ENCODE measurements at regions of chr11 and their contacts with region 1.

Region 1: GRCh38 chr11:122754553-122755322 is 83.6 kb upstream of the CRTAM start:
- DNase-seq: peak in 3 of 5 donors; percentile 28 to 54 (median 46)
- H3K4me3 ChIP-seq: no peak overlapping the region
- H3K4me3 Mint-ChIP-seq: no peak overlapping the region
- H3K27ac ChIP-seq: no peak overlapping the region
- H3K27ac Mint-ChIP-seq: peak overlapping the region in 4 of 8 donors; percentile 19 to 66 (median 50)
- H3K4me1 ChIP-seq: peaks cover 38% of the 10 kb centered on the region
- H3K4me1 Mint-ChIP-seq: peaks cover 42 to 60% (median 45%) of the 10 kb centered on the region in 3 donors
- H3K27me3 ChIP-seq: no peaks in the 10 kb centered on the region
- H3K27me3 Mint-ChIP-seq: no peaks in the 10 kb centered on the region

Region 2: GRCh38 chr11:122628810-122629555 is 125.8 kb before region 1 on chr11:
- CTCF ChIA-PET with region 1: interaction called, 199 read pairs
- POLR2A ChIA-PET with region 1: no interaction called
- DNase-seq: peak; percentile 39 to 76 (median 42)
- H3K4me3 ChIP-seq: no peak overlapping the region
- H3K4me3 Mint-ChIP-seq: peak overlapping the region in 1 of 7 donors; percentile 15
- H3K27ac ChIP-seq: no peak overlapping the region
- H3K27ac Mint-ChIP-seq: peak overlapping the region in 1 of 8 donors; percentile 41
- H3K4me1 ChIP-seq: no peaks in the 10 kb centered on the region
- H3K4me1 Mint-ChIP-seq: peaks cover 5 to 12% (median 7%) of the 10 kb centered on the region in 3 donors
- H3K27me3 ChIP-seq: no peaks in the 10 kb centered on the region
- H3K27me3 Mint-ChIP-seq: peaks cover 0 to 6% of the 10 kb centered on the region in 2 donors

Region 3: GRCh38 chr11:122661182-122661945 is 93.4 kb before region 1 on chr11:
- CTCF ChIA-PET with region 1: interaction called, 53 read pairs
- POLR2A ChIA-PET with region 1: interaction called, 8 read pairs
- DNase-seq: no peak
- H3K4me3 ChIP-seq: no peak overlapping the region
- H3K4me3 Mint-ChIP-seq: no peak overlapping the region
- H3K27ac ChIP-seq: no peak overlapping the region
- H3K27ac Mint-ChIP-seq: peak overlapping the region in 5 of 8 donors; percentile 7 to 90 (median 62)
- H3K4me1 ChIP-seq: peaks cover 53% of the 10 kb centered on the region
- H3K4me1 Mint-ChIP-seq: peaks cover 65 to 87% (median 65%) of the 10 kb centered on the region in 3 donors
- H3K27me3 ChIP-seq: no peaks in the 10 kb centered on the region
- H3K27me3 Mint-ChIP-seq: peaks cover 0 to 1% of the 10 kb centered on the region in 2 donors

Region 4: GRCh38 chr11:122697636-122698167 is 57.0 kb before region 1 on chr11:
- CTCF ChIA-PET with region 1: interaction called, 37 read pairs
- POLR2A ChIA-PET with region 1: interaction called, 6 read pairs
- DNase-seq: peak in 3 of 5 donors; percentile 26 to 60 (median 56)
- H3K4me3 ChIP-seq: peak overlapping the region; percentile 45
- H3K4me3 Mint-ChIP-seq: peak overlapping the region; percentile 31 to 87 (median 76)
- H3K27ac ChIP-seq: no peak overlapping the region
- H3K27ac Mint-ChIP-seq: peak overlapping the region; percentile 84 to 99 (median 93)
- H3K4me1 ChIP-seq: peaks cover 66% of the 10 kb centered on the region
- H3K4me1 Mint-ChIP-seq: peaks cover 75 to 87% (median 86%) of the 10 kb centered on the region in 3 donors
- H3K27me3 ChIP-seq: no peaks in the 10 kb centered on the region
- H3K27me3 Mint-ChIP-seq: no peaks in the 10 kb centered on the region

Region 5: GRCh38 chr11:122765487-122766131 is 10.9 kb after region 1 on chr11:
- CTCF ChIA-PET with region 1: interaction called, 19 read pairs
- POLR2A ChIA-PET with region 1: no interaction called
- DNase-seq: no peak
- H3K4me3 ChIP-seq: no peak overlapping the region
- H3K4me3 Mint-ChIP-seq: no peak overlapping the region
- H3K27ac ChIP-seq: no peak overlapping the region
- H3K27ac Mint-ChIP-seq: peak overlapping the region in 1 of 8 donors; percentile 42
- H3K4me1 ChIP-seq: no peaks in the 10 kb centered on the region
- H3K4me1 Mint-ChIP-seq: peaks cover 9 to 14% (median 9%) of the 10 kb centered on the region in 3 donors
- H3K27me3 ChIP-seq: no peaks in the 10 kb centered on the region
- H3K27me3 Mint-ChIP-seq: no peaks in the 10 kb centered on the region

Measured in CD8-positive, alpha-beta memory T cell (primary cell).